A549 (cell line): ENCODE measurements at regions of chr1 and their contacts with region 1.

Region 1: DNA sequence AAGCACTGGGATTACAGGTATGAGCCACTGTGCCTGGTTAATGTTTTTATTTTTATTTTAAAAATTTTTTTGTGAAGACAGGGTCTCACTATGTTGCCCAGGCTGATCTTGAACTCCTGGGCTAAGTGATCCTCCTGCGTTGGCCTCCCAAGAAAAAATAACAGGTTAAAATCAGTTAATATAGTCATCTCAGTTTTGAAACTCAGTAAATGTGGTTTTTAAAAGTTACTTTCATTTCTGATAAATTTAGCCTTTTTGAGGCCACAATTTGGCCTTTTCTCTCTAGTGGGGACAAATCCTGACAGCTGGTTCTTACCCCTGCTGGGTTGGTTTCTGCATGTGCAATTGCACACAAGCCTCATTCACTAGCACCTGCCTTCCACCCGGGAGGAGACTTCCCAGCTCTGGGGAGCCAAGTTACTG is 13.3 kb downstream of the PMF1 start:
- DNase-seq: no peak
- ATAC-seq: no peak
- H3K4me3 ChIP-seq: no peak overlapping the region
- H3K27ac ChIP-seq: no peak overlapping the region
- H3K4me1 ChIP-seq: peaks cover 14% of the 10 kb centered on the region
- CTCF ChIP-seq: no peak
- EP300 ChIP-seq: no peak
- POLR2A ChIP-seq: no peak
- RAD21 ChIP-seq: no peak

Region 2: DNA sequence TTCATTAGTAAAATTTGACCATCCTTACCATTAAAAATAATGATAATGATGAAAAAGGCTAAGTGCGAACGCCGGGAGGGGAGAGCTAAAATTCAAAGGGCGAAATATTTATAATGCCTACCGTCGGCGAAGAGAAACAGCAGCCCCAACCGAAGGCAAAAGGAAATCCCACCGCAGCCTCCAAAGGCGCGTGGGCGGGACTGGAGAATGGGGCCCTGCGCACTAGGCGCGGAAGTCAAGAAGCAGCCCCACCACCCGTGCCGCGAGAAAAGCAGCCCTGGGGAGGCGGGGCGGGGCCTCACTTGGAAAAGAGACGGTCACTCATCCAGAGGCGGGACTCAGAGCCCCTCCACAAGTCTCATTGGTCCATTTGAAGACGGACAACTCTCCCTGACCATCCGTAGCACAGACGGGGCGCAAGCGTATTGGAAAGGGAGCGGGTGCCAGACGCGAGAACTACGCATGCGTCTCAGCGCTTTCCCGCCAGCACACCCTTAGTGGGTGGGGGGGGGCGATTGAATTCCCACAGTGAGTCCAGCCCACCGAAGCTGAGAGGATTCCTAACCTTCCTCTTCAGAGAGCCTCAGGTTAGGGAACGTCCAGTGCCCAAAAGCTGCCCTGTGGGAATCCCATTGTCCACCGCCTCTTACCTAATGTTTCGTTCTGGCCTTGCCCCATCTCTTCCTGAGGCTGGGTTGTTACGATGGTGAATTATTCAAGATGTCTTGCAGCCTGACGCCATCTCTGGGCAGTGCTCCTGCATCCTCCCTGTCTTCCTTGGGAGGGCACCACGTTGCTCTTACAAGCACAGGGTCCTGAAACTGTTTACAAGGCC is 998.6 kb before region 1 on chr1:
- CTCF ChIA-PET with region 1: no interaction called
- POLR2A ChIA-PET with region 1: interaction called, 11 read pairs
- DNase-seq: peak; percentile 99 to 100
- ATAC-seq: peak; percentile 94 to 97
- H3K4me3 ChIP-seq: peak overlapping the region; percentile 57
- H3K27ac ChIP-seq: peak overlapping the region; percentile 88 to 90
- H3K4me1 ChIP-seq: peaks cover 43% of the 10 kb centered on the region
- CTCF ChIP-seq: no peak
- EP300 ChIP-seq: no peak
- POLR2A ChIP-seq: peak; percentile 82
- RAD21 ChIP-seq: no peak

Region 3: GRCh38 chr1:156096640-156097391 is 129.3 kb before region 1 on chr1:
- CTCF ChIA-PET with region 1: interaction called, 291 read pairs
- POLR2A ChIA-PET with region 1: no interaction called
- DNase-seq: peak; percentile 86 to 93
- ATAC-seq: peak; percentile 96 to 97
- H3K4me3 ChIP-seq: no peak overlapping the region
- H3K27ac ChIP-seq: peak overlapping the region; percentile 91 to 93
- H3K4me1 ChIP-seq: peaks cover 44% of the 10 kb centered on the region
- CTCF ChIP-seq: peak; percentile 95
- EP300 ChIP-seq: no peak
- POLR2A ChIP-seq: no peak
- RAD21 ChIP-seq: peak; percentile 98 to 99

Region 4: GRCh38 chr1:156172696-156173470 is 53.2 kb before region 1 on chr1:
- CTCF ChIA-PET with region 1: interaction called, 35 read pairs
- POLR2A ChIA-PET with region 1: no interaction called
- DNase-seq: peak; percentile 32 to 47
- ATAC-seq: peak; percentile 72 to 75; a peak in 4 of 6 replicates
- H3K4me3 ChIP-seq: no peak overlapping the region
- H3K27ac ChIP-seq: no peak overlapping the region
- H3K4me1 ChIP-seq: no peaks in the 10 kb centered on the region
- CTCF ChIP-seq: no peak
- EP300 ChIP-seq: no peak
- POLR2A ChIP-seq: no peak
- RAD21 ChIP-seq: no peak

Region 5: DNA sequence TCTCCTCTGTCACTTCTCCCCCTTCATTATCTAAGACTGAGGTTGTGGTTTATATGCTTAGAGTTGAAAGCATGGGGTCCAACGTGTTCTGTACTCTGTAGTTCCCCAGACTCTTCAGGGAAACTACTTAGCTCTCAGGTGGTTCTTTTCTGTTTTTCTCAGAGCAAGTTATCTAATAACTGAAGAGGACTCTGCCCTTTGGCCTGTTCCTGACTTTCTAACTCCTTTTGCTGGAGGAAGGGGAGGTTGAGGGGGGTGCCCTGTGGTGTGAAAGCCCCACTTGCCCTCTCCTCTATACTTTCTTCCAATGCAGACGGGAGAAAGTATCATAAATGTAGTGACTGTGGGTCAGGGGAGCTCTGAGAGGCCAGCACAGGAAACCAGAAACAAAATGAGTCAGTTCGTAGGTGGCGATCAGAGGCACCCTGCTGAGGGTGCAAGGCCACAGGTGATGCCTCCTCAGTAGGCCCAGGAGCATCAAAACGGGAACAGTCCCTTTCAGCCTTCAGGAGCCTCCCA is 27.2 kb before region 1 on chr1:
- CTCF ChIA-PET with region 1: interaction called, 47 read pairs
- POLR2A ChIA-PET with region 1: interaction called, 7 read pairs
- DNase-seq: no peak
- ATAC-seq: no peak
- H3K4me3 ChIP-seq: no peak overlapping the region
- H3K27ac ChIP-seq: no peak overlapping the region
- H3K4me1 ChIP-seq: peaks cover 10% of the 10 kb centered on the region
- CTCF ChIP-seq: no peak
- EP300 ChIP-seq: no peak
- POLR2A ChIP-seq: no peak
- RAD21 ChIP-seq: no peak

Region 6: GRCh38 chr1:156407344-156407743 is 181.2 kb after region 1 on chr1:
- CTCF ChIA-PET with region 1: no interaction called
- POLR2A ChIA-PET with region 1: no interaction called
- DNase-seq: no peak
- ATAC-seq: peak in 1 of 2 experiments; percentile 13; a peak in 1 of 6 replicates
- H3K4me3 ChIP-seq: no peak overlapping the region
- H3K27ac ChIP-seq: no peak overlapping the region
- H3K4me1 ChIP-seq: no peaks in the 10 kb centered on the region
- CTCF ChIP-seq: no peak
- EP300 ChIP-seq: no peak
- POLR2A ChIP-seq: no peak
- RAD21 ChIP-seq: no peak